Activated B cell treated with CpG ODN at 0.5 μM for 24 hours (primary cell): ENCODE measurements at regions of chr5 and their contacts with region 1.

Region 1: DNA sequence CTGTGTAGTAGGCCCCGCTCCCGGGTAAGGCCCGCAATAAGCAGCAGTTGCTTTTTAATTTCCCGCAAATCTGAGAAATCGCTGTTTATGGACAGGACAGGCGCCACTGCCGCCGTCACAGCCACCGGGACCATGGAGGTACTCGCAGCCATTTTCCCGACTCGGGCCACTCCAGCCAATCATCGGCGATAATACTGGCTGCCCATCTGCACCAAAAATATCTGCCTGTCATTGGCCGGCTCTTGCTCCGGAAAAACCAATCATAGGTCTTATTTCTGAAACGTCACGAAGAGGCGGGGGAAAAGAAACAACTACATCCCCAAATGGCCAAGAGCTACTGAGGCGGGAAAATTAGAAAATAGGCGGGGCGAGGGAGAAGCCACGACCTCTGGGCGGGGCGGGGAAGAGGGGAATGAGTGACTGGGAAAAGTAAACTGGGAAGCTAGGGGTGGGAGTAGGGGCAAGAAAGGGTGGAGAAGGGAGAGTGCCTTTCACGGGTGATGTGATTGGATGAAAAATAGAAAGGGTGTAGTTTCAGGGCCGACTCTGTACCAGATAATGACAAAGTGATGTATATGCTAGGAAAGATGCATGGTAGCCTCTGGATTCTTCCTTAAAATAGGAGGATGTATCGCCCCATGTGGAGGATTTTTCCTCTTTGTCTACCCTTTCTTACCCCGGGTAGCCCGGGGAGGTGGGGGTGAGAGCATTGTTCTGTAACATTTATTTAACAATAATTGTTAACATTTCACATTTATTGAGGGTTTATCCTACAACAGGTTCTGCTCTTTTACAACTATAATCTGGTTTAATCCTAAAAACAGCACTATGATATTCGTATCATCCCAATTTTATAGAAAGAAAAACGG is at the start of gene CDC23:
- DNase-seq: peak; percentile 67
- ATAC-seq: peak; percentile 96
- H3K4me3 Mint-ChIP-seq: peak within 1 kb of the TSS; percentile 99
- H3K27ac Mint-ChIP-seq: peak within 1 kb of the TSS; percentile 93
- H3K4me1 Mint-ChIP-seq: peaks cover 27% of the 10 kb centered on the region
- H3K27me3 Mint-ChIP-seq: no peaks in the 10 kb centered on the region
- CTCF ChIP-seq: no peak
- total RNA-seq, gene CDC23: 31.9 and 35.0 TPM in 2 replicates

Region 2: DNA sequence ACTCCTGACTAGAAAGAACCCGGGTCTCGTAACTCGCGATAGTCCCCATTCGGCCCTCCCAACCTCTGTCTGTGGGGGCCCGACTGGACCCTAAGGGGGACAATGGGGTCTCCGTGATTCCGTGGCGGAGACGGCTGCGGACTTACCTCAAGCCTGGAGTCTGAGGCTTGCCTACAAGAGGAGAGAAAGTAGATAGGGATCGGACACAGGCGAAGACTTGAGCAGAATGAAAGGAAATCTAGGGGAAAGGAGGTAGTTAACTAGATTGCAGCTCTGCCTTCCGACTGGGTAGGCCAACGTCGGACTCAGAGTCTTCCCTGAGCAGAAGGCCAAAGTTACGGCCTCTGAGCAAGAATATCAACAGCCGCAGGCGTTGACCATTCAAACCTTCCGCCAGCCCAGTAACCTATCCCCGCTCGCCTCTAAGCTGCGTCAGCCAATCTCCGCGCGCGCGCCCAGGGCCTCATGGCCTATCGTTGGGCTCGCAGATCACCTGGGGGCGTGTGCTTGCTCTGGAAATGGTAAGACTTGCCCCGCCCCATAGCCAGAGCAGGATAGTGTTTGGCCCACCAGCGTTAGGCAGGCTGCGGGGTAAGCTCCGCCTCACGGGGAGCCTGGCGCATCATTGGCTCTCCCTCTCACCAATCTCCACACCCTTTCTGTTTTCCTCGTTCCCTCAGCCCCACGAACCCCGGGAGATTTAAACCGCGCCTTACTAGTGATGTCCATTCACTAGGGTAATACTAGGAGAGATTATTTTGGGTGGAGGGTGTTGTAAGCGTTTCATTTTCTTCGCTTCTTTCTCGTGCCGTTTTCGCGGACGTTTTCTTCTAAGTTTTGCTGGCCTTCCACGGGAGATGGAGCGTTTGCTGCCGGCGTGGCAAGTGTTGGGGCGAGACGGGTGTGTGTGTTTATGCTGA is 118.3 kb after region 1 on chr5 and contains the start of gene CDC25C:
- CTCF ChIA-PET with region 1: no interaction called
- POLR2A ChIA-PET with region 1: interaction called, 15 read pairs
- intact Hi-C with region 1: no loop called
- DNase-seq: peak; percentile 83
- ATAC-seq: peak; percentile 100
- H3K4me3 Mint-ChIP-seq: peak within 1 kb of the TSS; percentile 92
- H3K27ac Mint-ChIP-seq: peak within 1 kb of the TSS; percentile 78
- H3K4me1 Mint-ChIP-seq: peaks cover 15% of the 10 kb centered on the region
- H3K27me3 Mint-ChIP-seq: no peaks in the 10 kb centered on the region
- CTCF ChIP-seq: no peak
- total RNA-seq, gene CDC25C: 0.42 TPM in 1 of 2 replicates, not detected in the other

Region 3: GRCh38 chr5:138337685-138338410 is 124.5 kb after region 1 on chr5 and contains the start of gene FAM53C:
- CTCF ChIA-PET with region 1: no interaction called
- POLR2A ChIA-PET with region 1: interaction called, 7 read pairs
- intact Hi-C with region 1: loop called (anchors 1 kb)
- DNase-seq: peak; percentile 97
- ATAC-seq: peak; percentile 81
- H3K4me3 Mint-ChIP-seq: peak within 1 kb of the TSS; percentile 90
- H3K27ac Mint-ChIP-seq: peak within 1 kb of the TSS; percentile 100
- H3K4me1 Mint-ChIP-seq: peaks cover 37% of the 10 kb centered on the region
- H3K27me3 Mint-ChIP-seq: no peaks in the 10 kb centered on the region
- CTCF ChIP-seq: no peak
- total RNA-seq, gene FAM53C: 23.5 and 24.9 TPM in 2 replicates

Region 4: DNA sequence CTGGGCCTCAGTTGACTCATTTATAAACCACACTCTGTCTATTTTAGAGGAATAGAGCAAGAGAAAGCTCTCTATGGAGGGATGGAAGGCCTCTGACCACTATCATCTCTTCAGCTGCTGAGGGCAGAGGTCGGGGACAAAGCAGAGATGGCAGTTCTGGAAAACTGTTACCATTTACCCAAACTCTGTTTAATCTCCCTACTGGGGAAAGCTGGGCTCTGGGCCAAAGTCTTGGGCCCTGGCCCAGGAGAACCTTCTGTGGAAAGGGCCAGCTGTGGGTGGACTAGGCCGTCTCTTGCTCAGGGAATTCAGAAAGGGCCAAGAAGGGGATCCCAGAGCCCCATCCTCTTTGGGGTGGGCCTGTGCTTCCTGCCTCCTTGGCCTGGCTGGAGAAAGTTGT is 1682.3 kb after region 1 on chr5:
- CTCF ChIA-PET with region 1: no interaction called
- POLR2A ChIA-PET with region 1: no interaction called
- intact Hi-C with region 1: no loop called
- DNase-seq: no peak
- ATAC-seq: no peak
- H3K4me3 Mint-ChIP-seq: no peak overlapping the region
- H3K27ac Mint-ChIP-seq: no peak overlapping the region
- H3K4me1 Mint-ChIP-seq: no peaks in the 10 kb centered on the region
- H3K27me3 Mint-ChIP-seq: peaks cover 26% of the 10 kb centered on the region
- CTCF ChIP-seq: no peak